PC-9 (cell line): ENCODE measurements at regions of chr5 and their contacts with region 1.

Region 1: DNA sequence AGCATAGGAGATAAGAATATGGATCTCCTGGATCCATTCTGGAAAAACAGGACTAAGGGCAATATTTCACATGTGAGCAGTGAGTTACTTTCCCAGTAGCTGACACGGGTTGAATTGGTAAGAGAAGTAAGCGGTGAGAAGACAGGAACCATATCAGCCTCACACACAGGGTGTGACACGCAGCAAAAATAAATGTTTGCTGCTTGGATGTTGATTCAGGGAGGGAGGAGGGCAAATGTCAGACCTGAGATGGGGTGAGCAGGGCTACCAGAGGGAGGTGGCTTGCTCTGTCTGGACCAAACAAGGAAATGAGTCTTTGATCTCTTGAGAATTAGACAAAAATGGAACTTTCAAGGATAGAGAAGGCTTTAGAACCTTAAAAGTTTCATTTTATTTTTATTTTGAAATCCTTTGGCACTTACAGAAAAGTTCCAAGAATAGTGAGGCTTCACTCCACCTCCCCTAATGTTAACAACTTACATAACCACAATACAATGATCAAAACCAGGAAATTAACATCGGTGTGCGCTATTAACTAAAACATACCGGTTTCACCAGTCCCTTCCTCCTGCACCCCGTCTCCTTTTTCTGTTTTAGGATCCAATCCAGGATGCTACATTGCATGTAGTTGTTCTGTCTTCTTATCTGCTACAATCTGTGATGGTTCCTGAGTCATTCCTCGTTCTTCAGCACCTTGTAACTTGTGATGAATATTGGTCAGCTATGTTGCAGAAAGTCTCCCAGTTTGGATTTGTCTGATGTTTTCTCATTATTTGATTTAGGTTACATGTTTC is 20.6 kb upstream of the ARHGEF28 start:
- DNase-seq: peak; percentile 38 to 86
- H3K4me3 ChIP-seq: peak overlapping the region; percentile 30; the same call in 1 of the 2 replicates
- H3K27ac ChIP-seq: peak overlapping the region; percentile 74
- H3K4me1 ChIP-seq: peaks cover 40% of the 10 kb centered on the region
- H3K27me3 ChIP-seq: no peaks in the 10 kb centered on the region
- CTCF ChIP-seq: no peak

Region 2: DNA sequence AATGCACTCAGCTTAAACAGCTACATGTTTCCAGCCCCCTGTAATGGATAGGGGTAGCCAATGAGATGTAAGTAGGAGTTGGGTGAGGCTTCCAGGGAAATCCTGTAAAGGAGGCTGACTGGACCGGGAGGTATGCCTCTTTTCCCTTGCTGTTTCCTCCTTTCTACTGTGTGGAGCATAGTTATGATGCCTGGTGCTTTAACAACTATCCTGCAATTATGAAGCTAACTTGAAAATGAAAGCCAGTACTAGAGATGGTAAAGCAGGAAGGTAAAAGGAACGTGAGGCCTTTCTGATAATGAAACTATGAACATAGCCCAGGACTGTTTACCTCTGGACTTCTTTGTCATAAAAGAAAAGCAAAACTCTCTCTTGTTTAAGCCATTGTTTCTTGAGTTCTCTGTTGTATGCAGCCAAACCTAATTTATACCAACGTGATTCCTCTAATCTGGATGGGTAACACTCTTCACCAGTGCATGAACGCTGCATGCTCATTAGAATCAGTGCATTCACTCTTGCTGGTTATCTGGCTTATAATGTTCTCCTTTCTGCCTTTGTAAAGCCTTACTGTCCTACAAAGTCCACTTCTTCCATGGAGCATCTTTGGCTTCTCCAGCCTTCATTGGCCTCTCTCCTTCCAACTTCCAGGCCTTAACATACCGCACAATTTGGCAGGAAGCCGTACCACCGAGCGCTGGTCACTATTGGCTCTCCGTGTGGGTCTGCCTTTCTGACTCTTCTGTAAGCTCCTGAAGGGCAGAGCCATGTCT is 12.3 kb after region 1 on chr5:
- CTCF ChIA-PET with region 1: no interaction called
- POLR2A ChIA-PET with region 1: no interaction called
- intact Hi-C with region 1: no loop called
- DNase-seq: peak in 1 of 2 experiments; percentile 43
- H3K4me3 ChIP-seq: no peak overlapping the region
- H3K27ac ChIP-seq: no peak overlapping the region
- H3K4me1 ChIP-seq: peaks cover 29% of the 10 kb centered on the region
- H3K27me3 ChIP-seq: no peaks in the 10 kb centered on the region
- CTCF ChIP-seq: no peak

Region 3: DNA sequence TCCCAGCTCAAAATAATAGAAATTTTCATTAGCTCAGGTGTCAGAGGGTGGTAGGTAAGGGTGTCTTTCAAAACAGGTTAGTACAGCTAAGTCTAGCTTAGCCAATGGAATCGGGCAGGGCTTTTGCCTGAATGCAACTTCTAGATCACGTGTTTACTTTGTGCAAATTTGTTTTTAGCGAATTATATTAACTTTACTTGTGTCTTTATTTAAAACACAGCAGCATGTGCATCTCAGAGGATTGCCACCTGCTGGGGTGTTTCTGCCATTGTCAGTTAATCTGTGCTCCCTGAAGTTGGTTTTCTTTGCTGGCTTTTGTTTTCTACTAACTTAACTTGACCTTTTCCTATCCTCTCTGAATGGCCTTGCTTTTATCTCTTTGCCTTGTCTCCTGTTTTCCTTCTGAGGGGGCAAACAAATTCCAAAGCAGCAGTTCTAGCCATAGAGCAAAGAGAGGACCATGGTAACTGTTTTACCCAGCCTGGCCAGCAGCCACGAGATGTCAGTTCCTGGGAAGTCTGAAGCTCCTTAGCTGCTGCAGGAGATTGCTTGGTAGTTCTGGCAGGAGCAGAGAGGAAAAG is 88.1 kb after region 1 on chr5:
- CTCF ChIA-PET with region 1: no interaction called
- POLR2A ChIA-PET with region 1: interaction called, 6 read pairs
- intact Hi-C with region 1: loop called (anchors 5 kb)
- DNase-seq: no peak
- H3K4me3 ChIP-seq: no peak overlapping the region
- H3K27ac ChIP-seq: no peak overlapping the region
- H3K4me1 ChIP-seq: peaks cover 35% of the 10 kb centered on the region
- H3K27me3 ChIP-seq: no peaks in the 10 kb centered on the region
- CTCF ChIP-seq: peak; percentile 66